ENCODE measurements at regions of chr6 and their contacts with region 1.

Region 1: GRCh38 chr6:32659856-32660595 is 6.4 kb downstream of the HLA-DQB1 start:
- DNase-seq: no peak
- ATAC-seq: peak; percentile 83
- H3K4me3 Mint-ChIP-seq: peak overlapping the region; percentile 65
- H3K27ac Mint-ChIP-seq: peak overlapping the region; percentile 93
- H3K4me1 Mint-ChIP-seq: peaks cover 66% of the 10 kb centered on the region
- H3K27me3 Mint-ChIP-seq: no peaks in the 10 kb centered on the region
- CTCF ChIP-seq: no peak

Region 2: DNA sequence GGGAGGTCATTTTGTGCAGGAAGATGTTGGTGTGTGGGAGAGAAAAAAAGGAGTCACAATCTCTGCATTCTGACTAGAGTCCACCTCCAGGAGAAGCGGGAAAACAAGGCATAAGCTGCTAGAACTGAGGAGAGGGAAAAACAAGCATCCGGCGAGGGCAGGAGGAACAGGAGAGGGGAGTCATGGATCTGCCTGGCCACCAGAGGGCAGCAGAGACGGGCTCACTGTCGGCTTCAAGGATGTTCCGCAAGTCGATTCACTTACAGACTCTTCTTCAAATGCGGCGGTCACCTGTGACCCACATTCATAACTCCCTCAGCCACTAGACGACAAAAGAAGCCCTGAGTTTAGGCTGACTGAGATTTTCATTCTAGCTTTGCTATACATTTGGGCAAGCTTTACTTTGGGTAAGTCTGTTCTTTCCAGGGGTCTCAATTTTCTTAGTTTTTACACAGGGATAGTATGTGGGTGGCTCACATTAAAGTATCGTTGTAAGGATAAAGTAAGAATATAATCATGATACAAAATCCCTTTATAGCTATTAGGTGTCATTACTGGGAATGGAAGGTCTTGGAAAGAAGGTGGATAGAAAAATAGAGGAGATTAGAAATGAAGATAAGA is 246.5 kb before region 1 on chr6:
- CTCF ChIA-PET with region 1: no interaction called
- POLR2A ChIA-PET with region 1: no interaction called
- intact Hi-C with region 1: no loop called
- DNase-seq: peak; percentile 80
- ATAC-seq: peak; percentile 88
- H3K4me3 Mint-ChIP-seq: peak overlapping the region; percentile 75
- H3K27ac Mint-ChIP-seq: peak overlapping the region; percentile 5
- H3K4me1 Mint-ChIP-seq: peaks cover 14% of the 10 kb centered on the region
- H3K27me3 Mint-ChIP-seq: peaks cover 4% of the 10 kb centered on the region
- CTCF ChIP-seq: no peak

Region 3: DNA sequence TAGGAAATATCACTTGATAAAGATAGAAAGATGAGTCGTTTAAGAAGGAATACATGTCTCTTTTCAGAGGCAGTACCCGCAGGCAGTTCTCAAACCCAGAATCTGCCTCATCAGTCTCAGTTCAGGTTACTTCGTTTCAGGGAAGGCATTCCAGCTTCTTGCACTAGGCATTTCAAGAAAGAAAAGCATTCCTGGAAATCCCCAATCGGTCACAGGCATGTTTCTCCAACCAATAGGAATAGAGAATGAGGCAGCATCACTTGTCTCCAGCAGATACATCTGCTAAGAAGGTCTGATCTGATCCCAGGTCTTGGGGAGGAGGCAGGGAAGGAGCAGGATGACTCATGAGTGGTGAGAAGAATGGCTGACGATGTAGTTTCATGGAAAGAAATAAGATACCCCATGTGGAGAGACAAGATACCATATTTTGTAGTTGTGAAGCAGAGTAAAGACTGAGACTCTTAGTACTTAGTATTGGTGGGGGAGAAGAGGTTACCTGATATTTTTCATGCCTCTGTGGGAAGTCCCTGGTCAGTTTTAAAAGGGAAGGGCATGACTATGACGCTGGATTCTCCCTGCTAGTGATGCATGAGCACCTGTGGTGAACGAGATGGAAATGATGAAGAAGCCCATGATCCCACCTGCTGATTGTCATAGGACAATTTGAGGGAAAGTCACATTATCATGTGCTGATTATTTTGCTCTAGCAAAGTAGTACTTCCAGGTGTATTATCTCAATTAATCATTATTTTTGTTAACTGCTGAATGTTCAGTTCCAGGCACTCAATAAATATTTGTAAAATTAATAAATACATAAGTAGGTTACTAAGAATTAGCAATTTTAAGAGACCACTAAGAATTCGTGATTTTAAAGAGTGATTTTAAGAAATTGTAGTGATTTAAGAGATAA is 50.0 kb before region 1 on chr6:
- CTCF ChIA-PET with region 1: no interaction called
- POLR2A ChIA-PET with region 1: interaction called, 36 read pairs
- intact Hi-C with region 1: no loop called
- DNase-seq: no peak
- ATAC-seq: peak; percentile 84
- H3K4me3 Mint-ChIP-seq: no peak overlapping the region
- H3K27ac Mint-ChIP-seq: no peak overlapping the region
- H3K4me1 Mint-ChIP-seq: peaks cover 56% of the 10 kb centered on the region
- H3K27me3 Mint-ChIP-seq: no peaks in the 10 kb centered on the region
- CTCF ChIP-seq: no peak

Region 4: GRCh38 chr6:32642720-32643106 is 17.3 kb before region 1 on chr6:
- CTCF ChIA-PET with region 1: no interaction called
- POLR2A ChIA-PET with region 1: interaction called, 59 read pairs
- intact Hi-C with region 1: loop called (anchors 2 kb)
- DNase-seq: no peak
- ATAC-seq: no peak
- H3K4me3 Mint-ChIP-seq: peak overlapping the region; percentile 100
- H3K27ac Mint-ChIP-seq: peak overlapping the region; percentile 77
- H3K4me1 Mint-ChIP-seq: peaks cover 61% of the 10 kb centered on the region
- H3K27me3 Mint-ChIP-seq: no peaks in the 10 kb centered on the region
- CTCF ChIP-seq: no peak

Region 5: DNA sequence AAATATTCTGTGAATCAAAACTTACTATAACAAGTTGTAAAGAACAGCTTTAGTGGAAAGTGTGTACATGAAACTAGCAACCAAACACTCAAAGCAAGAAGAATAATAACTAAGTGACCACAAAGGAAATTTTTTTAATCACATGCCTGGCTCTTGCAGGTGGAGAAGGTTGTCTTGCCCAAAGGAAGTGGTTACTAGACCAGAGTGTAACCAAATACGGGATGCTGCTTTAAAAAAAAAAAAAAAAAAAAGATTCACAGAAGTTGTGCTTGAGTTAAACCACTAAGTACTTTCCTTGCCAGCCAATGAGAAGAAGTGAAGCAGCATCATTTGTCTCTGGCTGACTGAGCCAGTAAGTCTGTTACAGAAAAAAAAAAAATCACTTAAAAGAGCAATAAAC is 25.6 kb after region 1 on chr6:
- CTCF ChIA-PET with region 1: interaction called, 3 read pairs
- POLR2A ChIA-PET with region 1: interaction called, 387 read pairs
- intact Hi-C with region 1: loop called (anchors 5 kb)
- DNase-seq: no peak
- ATAC-seq: peak; percentile 70
- H3K4me3 Mint-ChIP-seq: peak overlapping the region; percentile 58
- H3K27ac Mint-ChIP-seq: peak overlapping the region; percentile 93
- H3K4me1 Mint-ChIP-seq: peaks cover 84% of the 10 kb centered on the region
- H3K27me3 Mint-ChIP-seq: no peaks in the 10 kb centered on the region
- CTCF ChIP-seq: no peak

Region 6: GRCh38 chr6:32692019-32692418 is 32.0 kb after region 1 on chr6:
- CTCF ChIA-PET with region 1: interaction called, 11 read pairs
- POLR2A ChIA-PET with region 1: interaction called, 387 read pairs
- intact Hi-C with region 1: loop called (anchors 5 kb)
- DNase-seq: no peak
- ATAC-seq: peak; percentile 49
- H3K4me3 Mint-ChIP-seq: peak overlapping the region; percentile 3
- H3K27ac Mint-ChIP-seq: peak overlapping the region; percentile 85
- H3K4me1 Mint-ChIP-seq: peaks cover 54% of the 10 kb centered on the region
- H3K27me3 Mint-ChIP-seq: no peaks in the 10 kb centered on the region
- CTCF ChIP-seq: no peak

Region 7: DNA sequence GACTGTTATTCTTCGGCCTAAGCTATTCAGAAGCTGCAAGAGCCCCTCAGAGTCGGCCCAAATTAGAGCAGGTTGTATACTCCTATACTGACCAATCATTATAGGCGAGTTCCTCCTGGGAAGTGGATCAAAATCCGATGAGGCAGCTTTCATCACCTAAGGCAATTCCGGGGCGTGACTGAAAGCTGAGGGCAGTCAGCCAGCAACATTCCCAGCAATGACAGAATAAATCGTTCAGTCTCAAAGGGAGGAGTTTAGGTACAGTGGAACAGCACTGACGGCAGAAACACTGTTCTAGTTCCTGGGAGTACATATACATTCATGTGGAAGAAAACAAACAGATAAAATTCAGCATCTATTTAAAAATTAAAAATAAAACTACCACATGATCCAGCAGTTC is 92.6 kb after region 1 on chr6:
- CTCF ChIA-PET with region 1: no interaction called
- POLR2A ChIA-PET with region 1: interaction called, 23 read pairs
- intact Hi-C with region 1: no loop called
- DNase-seq: no peak
- ATAC-seq: no peak
- H3K4me3 Mint-ChIP-seq: no peak overlapping the region
- H3K27ac Mint-ChIP-seq: no peak overlapping the region
- H3K4me1 Mint-ChIP-seq: peaks cover 1% of the 10 kb centered on the region
- H3K27me3 Mint-ChIP-seq: peaks cover 7% of the 10 kb centered on the region
- CTCF ChIP-seq: no peak

Region 8: DNA sequence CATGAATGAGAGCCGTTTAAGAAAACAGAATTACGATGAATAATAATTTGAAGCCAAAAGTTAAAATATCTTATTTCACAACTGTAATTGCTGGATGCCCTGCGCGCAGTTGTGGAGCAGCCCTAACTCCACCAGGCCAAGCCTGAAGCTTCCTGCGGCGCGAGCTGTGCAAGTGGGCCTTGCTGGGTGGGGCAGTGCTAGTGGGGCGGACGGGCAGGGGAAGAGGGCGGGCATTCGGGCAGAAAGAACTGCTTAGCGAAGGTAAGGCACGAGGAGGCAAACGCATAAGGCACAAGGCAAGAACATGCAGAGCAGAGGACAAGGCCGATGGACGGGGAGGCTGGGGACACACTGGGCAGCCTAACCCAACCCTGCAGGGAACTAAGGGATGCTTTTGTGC is 101.0 kb after region 1 on chr6:
- CTCF ChIA-PET with region 1: interaction called, 4 read pairs
- POLR2A ChIA-PET with region 1: interaction called, 205 read pairs
- intact Hi-C with region 1: no loop called
- DNase-seq: no peak
- ATAC-seq: peak; percentile 42
- H3K4me3 Mint-ChIP-seq: peak overlapping the region; percentile 83
- H3K27ac Mint-ChIP-seq: peak overlapping the region; percentile 86
- H3K4me1 Mint-ChIP-seq: peaks cover 6% of the 10 kb centered on the region
- H3K27me3 Mint-ChIP-seq: peaks cover 6% of the 10 kb centered on the region
- CTCF ChIP-seq: no peak